Activated CD4-positive, alpha-beta T cell treated with anti-CD3 and anti-CD28 coated beads, Interleukin-2, amount 10 ng/mL, durations not matched to agents 24 days and 14 days (primary cell): ENCODE measurements at regions of chr9 and their contacts with region 1.

Region 1: DNA sequence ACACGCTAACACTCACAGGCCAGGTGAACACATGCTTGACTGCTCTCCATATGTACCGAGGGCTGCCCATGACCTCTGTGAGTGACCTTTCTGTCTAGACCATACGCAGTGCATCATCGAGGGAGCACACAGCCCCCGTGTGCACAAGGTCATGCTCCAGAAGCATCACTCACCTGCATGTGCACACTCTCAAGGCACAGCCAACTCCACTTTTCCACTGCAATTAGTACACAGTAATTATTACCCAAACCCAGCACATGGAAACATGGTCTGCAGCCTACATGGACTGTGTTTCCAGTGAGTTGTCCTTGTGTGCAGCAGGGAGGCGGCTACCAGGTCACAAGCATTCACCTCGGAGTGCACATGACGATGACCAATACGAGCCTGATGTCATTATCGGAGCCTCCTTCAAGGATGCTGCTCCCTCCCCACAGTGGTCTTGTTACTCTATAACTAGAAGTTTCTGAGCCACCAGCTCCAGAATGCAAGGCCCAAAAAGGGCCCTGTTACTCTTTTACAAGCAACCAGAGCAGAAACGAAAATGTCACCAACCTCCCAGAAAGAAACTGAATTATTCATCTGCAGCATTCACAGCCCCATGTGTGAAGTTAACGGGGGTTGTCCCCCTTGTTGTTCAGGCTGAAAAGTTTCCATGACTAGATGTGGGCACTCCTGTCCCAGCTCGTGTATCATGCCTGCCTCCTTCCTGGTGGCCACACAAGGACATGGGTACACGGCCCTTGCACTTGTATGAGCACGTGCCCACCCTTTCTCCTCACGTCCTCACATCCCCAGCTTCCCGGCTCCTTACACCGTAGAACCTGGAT is 31.2 kb downstream of the SEMA4D start:
- DNase-seq: peak; percentile 82
- H3K4me3 Mint-ChIP-seq: peak overlapping the region; percentile 89
- H3K27ac Mint-ChIP-seq: peak overlapping the region; percentile 96
- H3K4me1 Mint-ChIP-seq: peaks cover 92% of the 10 kb centered on the region
- H3K27me3 Mint-ChIP-seq: no peaks in the 10 kb centered on the region

Region 2: GRCh38 chr9:88971131-88971960 is 495.3 kb before region 1 on chr9:
- intact Hi-C with region 1: no loop called
- DNase-seq: no peak
- H3K4me3 Mint-ChIP-seq: no peak overlapping the region
- H3K27ac Mint-ChIP-seq: no peak overlapping the region
- H3K4me1 Mint-ChIP-seq: peaks cover 4% of the 10 kb centered on the region
- H3K27me3 Mint-ChIP-seq: peaks cover 2% of the 10 kb centered on the region

Region 3: DNA sequence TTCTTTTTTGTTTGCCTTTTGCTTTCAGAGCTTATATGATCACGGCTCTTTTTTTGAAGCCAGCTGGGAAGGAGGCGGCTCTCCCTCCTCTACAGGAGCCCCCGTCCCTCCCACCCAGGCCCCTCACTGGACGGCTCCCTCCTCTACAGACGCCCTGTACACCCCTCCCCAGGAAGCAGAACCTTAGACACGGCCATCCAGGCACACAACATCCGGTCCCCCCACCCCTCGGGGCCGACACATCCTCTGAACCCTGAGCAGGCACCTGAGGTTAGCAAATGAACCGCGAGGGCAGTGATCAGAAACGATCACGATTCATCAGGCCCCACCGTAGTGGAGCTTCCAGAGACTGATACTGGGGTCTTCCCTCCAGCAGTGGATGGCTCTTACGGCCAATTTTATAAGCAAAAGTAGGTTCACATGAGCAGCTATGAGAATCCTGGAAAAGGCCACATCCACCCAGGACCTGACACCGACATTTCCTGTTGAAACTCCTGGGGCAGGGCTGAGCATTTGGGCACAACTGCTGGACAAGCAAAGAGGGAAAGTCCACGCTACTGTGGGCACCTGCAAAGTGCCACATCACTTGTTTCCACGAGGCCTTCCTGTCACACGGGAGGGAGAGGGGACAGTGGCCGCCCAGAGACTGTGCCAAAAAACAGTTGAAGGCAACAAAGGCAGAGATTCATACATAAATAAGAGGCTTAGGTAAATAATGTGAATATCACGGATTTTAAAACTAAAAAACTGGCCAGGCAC is 47.6 kb before region 1 on chr9:
- intact Hi-C with region 1: loop called (anchors 1 kb)
- DNase-seq: peak; percentile 92
- H3K4me3 Mint-ChIP-seq: peak overlapping the region; percentile 93
- H3K27ac Mint-ChIP-seq: peak overlapping the region; percentile 86
- H3K4me1 Mint-ChIP-seq: peaks cover 82% of the 10 kb centered on the region
- H3K27me3 Mint-ChIP-seq: no peaks in the 10 kb centered on the region

Region 4: DNA sequence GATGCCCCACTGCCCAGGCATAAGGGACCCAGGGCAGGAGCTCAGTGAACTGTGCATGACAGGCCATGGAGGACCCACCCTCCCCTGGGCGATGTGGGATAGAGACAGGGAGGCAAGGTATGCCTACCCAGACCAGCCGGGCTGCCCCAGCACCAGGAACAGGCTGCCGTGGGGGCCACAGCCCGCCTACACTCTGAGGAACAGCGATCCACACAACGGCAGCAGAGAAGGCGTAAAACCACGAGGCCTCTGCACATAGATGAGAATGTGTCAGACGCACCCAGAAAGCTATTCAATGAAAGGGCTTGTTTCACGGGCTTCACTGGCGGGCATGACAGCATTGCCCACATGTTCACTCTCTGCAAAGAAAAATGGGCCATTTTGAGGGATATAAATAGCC is 18.3 kb before region 1 on chr9:
- intact Hi-C with region 1: loop called (anchors 2 kb)
- DNase-seq: no peak
- H3K4me3 Mint-ChIP-seq: peak overlapping the region; percentile 71
- H3K27ac Mint-ChIP-seq: peak overlapping the region; percentile 93
- H3K4me1 Mint-ChIP-seq: peaks cover 83% of the 10 kb centered on the region
- H3K27me3 Mint-ChIP-seq: no peaks in the 10 kb centered on the region

Region 5: GRCh38 chr9:89489548-89490530 is 23.2 kb after region 1 on chr9:
- intact Hi-C with region 1: loop called (anchors 1 kb)
- DNase-seq: peak; percentile 77
- H3K4me3 Mint-ChIP-seq: peak overlapping the region; percentile 70
- H3K27ac Mint-ChIP-seq: peak overlapping the region; percentile 90
- H3K4me1 Mint-ChIP-seq: peaks cover 83% of the 10 kb centered on the region
- H3K27me3 Mint-ChIP-seq: no peaks in the 10 kb centered on the region

Region 6: DNA sequence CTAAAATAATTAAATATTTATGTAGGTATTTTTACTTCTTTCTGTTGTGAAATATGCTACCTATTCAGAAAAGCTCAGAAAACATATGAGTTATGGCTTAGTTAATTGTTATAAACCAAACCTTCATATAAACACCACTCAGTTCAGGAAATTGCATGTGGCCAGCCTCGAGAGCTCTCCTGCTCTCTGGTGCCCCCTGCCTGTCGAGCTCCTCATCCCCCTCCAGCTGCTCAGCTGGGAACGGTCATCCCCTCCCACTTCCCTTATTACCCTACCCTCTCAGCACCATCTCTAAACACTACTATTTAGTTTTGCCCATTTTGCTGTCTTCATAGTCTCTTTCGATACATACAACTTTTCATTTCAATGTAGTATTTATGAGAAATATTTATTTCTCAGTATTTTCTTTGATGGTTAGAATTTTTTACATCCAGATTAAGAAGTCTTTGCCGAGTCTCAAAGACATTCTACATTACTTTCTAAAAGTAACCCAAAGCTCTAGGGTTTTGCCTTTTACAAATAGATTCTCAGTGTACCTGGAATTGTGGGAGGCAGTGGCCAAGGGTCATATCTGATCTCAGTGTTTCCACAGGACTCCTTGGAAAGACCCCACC is 82.5 kb after region 1 on chr9:
- intact Hi-C with region 1: loop called (anchors 2 kb)
- DNase-seq: peak; percentile 95
- H3K4me3 Mint-ChIP-seq: peak overlapping the region; percentile 28
- H3K27ac Mint-ChIP-seq: peak overlapping the region; percentile 62
- H3K4me1 Mint-ChIP-seq: peaks cover 19% of the 10 kb centered on the region
- H3K27me3 Mint-ChIP-seq: peaks cover 11% of the 10 kb centered on the region